Panc1 (cell line): ENCODE measurements at regions of chr6 and their contacts with region 1.

Region 1: GRCh38 chr6:160455541-160456213 is 107.5 kb downstream of the SLC22A3 start:
- DNase-seq: peak; percentile 28
- ATAC-seq: peak; percentile 82
- H3K4me3 ChIP-seq: no peak overlapping the region
- H3K27ac ChIP-seq: no peak overlapping the region
- H3K4me1 ChIP-seq: no peaks in the 10 kb centered on the region
- H3K27me3 ChIP-seq: no peaks in the 10 kb centered on the region; the same call in 1 of the 2 replicates
- CTCF ChIP-seq: peak; percentile 93

Region 2: GRCh38 chr6:159862103-159862502 is 593.6 kb before region 1 on chr6:
- CTCF ChIA-PET with region 1: interaction called, 5 read pairs
- POLR2A ChIA-PET with region 1: no interaction called
- in situ Hi-C with region 1: no loop called
- intact Hi-C with region 1: loop called (anchors 10 kb)
- DNase-seq: no peak
- ATAC-seq: no peak
- H3K4me3 ChIP-seq: no peak overlapping the region
- H3K27ac ChIP-seq: no peak overlapping the region
- H3K4me1 ChIP-seq: no peaks in the 10 kb centered on the region
- H3K27me3 ChIP-seq: 0 out of 2 replicates have a peak, but pooled peaks cover 2% of the 10 kb centered on the region
- CTCF ChIP-seq: no peak

Region 3: GRCh38 chr6:160088069-160088783 is 367.5 kb before region 1 on chr6:
- CTCF ChIA-PET with region 1: interaction called, 4 read pairs
- POLR2A ChIA-PET with region 1: no interaction called
- in situ Hi-C with region 1: no loop called
- intact Hi-C with region 1: loop called (anchors 5 kb)
- DNase-seq: no peak
- ATAC-seq: peak; percentile 88
- H3K4me3 ChIP-seq: no peak overlapping the region
- H3K27ac ChIP-seq: no peak overlapping the region
- H3K4me1 ChIP-seq: no peaks in the 10 kb centered on the region
- H3K27me3 ChIP-seq: no peaks in the 10 kb centered on the region
- CTCF ChIP-seq: peak; percentile 84

Region 4: GRCh38 chr6:160137989-160138835 is 317.5 kb before region 1 on chr6:
- CTCF ChIA-PET with region 1: interaction called, 10 read pairs
- POLR2A ChIA-PET with region 1: no interaction called
- in situ Hi-C with region 1: no loop called
- intact Hi-C with region 1: loop called (anchors 1 kb)
- DNase-seq: peak; percentile 39
- ATAC-seq: no peak
- H3K4me3 ChIP-seq: no peak overlapping the region
- H3K27ac ChIP-seq: no peak overlapping the region
- H3K4me1 ChIP-seq: no peaks in the 10 kb centered on the region
- H3K27me3 ChIP-seq: no peaks in the 10 kb centered on the region
- CTCF ChIP-seq: peak; percentile 83